ENCODE measurements at regions of chr9 and their contacts with region 1.

Region 1: GRCh38 chr9:76704593-76705204 is 59.5 kb upstream of the PCA3 start:
- DNase-seq: no peak
- ATAC-seq: no peak
- H3K4me3 Mint-ChIP-seq: peak overlapping the region; percentile 5
- H3K27ac Mint-ChIP-seq: no peak overlapping the region
- H3K4me1 Mint-ChIP-seq: peaks cover 14% of the 10 kb centered on the region
- H3K27me3 Mint-ChIP-seq: peaks cover 62% of the 10 kb centered on the region

Region 2: GRCh38 chr9:76401580-76402354 is 302.9 kb before region 1 on chr9:
- CTCF ChIA-PET with region 1: interaction called, 12 read pairs
- DNase-seq: no peak
- ATAC-seq: no peak
- H3K4me3 Mint-ChIP-seq: no peak overlapping the region
- H3K27ac Mint-ChIP-seq: no peak overlapping the region
- H3K4me1 Mint-ChIP-seq: peaks cover 42% of the 10 kb centered on the region
- H3K27me3 Mint-ChIP-seq: no peaks in the 10 kb centered on the region

Region 3: DNA sequence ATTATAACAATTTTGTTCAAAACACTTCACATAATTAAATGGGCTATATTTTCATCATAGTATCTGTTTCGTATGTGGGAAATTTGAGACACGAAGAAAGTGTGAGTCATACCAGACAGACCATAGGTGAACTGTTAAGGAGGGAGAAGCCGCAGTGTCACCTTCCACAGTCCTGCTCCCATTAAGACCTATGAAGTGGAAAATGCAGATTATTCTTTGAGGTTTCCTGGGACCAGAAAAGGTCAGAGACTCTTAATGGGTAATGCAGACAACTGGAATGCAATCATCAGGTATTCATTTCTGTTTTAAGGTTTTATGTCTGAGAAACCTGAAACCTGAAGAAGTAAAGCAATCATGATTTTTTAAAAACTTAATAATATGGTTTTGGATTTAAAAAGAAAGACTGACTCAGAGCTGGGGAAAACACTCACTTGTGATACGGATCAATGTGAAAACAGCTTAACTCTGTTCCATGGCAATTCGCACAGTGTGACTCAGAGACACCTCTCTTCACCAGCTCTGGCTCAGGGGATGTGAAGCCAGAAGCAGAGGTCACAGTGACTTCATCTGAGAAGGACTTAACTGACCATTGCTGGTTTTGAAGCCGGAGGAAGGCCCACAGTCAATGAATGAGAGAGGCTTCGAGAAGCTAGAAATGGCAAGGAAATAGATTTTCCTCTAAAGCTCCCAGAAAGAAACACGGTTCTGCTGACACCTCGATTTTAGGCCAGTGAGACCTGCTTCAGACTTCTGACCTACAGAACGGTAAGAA is 263.0 kb before region 1 on chr9:
- CTCF ChIA-PET with region 1: interaction called, 44 read pairs
- DNase-seq: peak; percentile 74
- ATAC-seq: peak; percentile 87
- H3K4me3 Mint-ChIP-seq: peak overlapping the region; percentile 65
- H3K27ac Mint-ChIP-seq: peak overlapping the region; percentile 84
- H3K4me1 Mint-ChIP-seq: peaks cover 70% of the 10 kb centered on the region
- H3K27me3 Mint-ChIP-seq: no peaks in the 10 kb centered on the region

Region 4: DNA sequence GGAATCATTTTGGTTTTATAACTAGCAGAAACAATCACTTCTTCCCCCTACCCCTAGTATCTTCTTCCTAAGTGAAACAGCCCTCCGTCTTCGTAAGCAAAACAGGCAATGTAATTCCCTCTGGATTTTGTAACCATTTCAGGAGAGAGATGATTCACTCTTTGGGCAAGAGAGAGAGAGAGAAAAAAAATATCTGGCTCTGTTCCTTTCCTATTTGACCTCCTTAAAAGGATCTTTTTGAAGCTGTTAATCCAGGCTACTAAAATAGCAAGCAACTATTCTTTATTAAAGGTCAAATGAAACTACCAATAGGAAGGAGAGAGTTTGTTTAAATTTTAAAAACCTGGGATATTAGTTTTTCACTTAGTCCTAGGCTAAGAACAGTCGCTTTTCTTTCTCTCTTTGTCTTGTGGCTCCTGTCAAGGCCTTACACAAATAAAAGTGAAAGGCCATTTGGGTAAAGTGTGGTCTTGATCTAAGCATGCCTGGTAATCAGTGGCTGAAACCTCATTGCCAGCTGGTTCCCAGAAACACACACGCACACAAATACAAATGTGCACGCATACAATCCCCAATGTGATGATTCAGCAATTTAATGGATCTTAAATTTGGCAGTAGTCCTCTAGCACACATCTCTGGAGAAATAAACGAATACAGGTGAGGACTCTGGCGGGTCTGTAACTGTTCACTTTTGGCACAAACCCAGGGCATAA is 131.0 kb after region 1 on chr9:
- CTCF ChIA-PET with region 1: no interaction called
- DNase-seq: no peak
- ATAC-seq: no peak
- H3K4me3 Mint-ChIP-seq: no peak overlapping the region
- H3K27ac Mint-ChIP-seq: no peak overlapping the region
- H3K4me1 Mint-ChIP-seq: no peaks in the 10 kb centered on the region
- H3K27me3 Mint-ChIP-seq: no peaks in the 10 kb centered on the region

Measured in activated CD8-positive, alpha-beta memory T cell treated with anti-CD3 and anti-CD28 coated beads, Interleukin-2, amount 10 ng/mL, durations not matched to agents 7 days and 5 days (primary cell).